ENCODE measurements at regions of chr2 and their contacts with region 1.

Region 1: GRCh38 chr2:20675701-20676352 is 8.9 kb downstream of the GDF7 start:
- DNase-seq: peak; percentile 15
- ATAC-seq: peak; percentile 89
- H3K4me3 ChIP-seq: no peak overlapping the region
- H3K27ac ChIP-seq: peak overlapping the region; percentile 69
- H3K4me1 ChIP-seq: peaks cover 37% of the 10 kb centered on the region
- H3K27me3 ChIP-seq: peaks cover 0 to 6% of the 10 kb centered on the region in 2 experiments; a peak in 3 of 4 replicates
- CTCF ChIP-seq: no peak
- EP300 ChIP-seq: no peak
- POLR2A ChIP-seq: no peak
- RAD21 ChIP-seq: no peak

Region 2: DNA sequence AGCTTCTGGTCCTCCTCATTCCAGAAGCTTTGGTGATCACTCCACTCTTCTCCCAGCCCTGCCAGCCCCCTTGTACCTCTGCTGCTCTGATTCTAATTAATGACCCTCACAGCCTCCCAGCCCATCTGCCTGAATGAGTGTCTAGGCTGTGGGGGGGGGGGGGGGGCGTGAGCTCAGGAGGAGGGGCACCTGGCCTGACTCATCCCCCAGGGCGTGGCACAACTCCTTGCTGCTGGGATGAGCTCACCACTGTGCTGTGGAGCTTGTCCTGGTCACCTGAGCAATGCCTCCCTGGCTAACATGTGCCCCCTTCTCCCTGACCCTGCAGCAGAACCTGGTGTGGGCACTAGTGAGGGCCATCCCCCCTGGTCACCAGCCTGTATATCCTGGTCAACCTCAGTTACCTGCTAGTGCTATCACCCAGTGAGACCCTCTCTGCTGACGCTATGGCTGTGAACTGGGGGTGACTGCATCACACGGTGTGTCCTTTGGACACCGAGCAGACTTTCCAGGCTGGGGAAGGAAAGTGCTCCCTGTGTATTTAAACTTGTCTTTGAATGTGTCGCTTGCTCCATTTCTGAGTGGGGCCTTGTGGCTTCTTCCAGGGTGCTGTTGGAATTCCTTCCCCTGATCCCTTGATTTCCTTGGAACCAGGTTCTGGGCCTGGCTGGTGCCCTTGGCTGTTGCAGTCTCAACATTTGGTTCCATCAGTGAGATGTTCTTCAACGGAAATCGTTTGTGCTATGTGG is 283.7 kb before region 1 on chr2:
- CTCF ChIA-PET with region 1: no interaction called
- POLR2A ChIA-PET with region 1: no interaction called
- RAD21 ChIA-PET with region 1: no interaction called
- SMC1A ChIA-PET with region 1: no interaction called
- in situ Hi-C with region 1: no loop called
- intact Hi-C with region 1: no loop called
- DNase-seq: no peak
- ATAC-seq: no peak
- H3K4me3 ChIP-seq: no peak overlapping the region
- H3K27ac ChIP-seq: no peak overlapping the region
- H3K4me1 ChIP-seq: no peaks in the 10 kb centered on the region
- H3K27me3 ChIP-seq: peaks cover 1 to 2% of the 10 kb centered on the region in 2 experiments
- CTCF ChIP-seq: no peak
- EP300 ChIP-seq: no peak
- POLR2A ChIP-seq: no peak
- RAD21 ChIP-seq: no peak

Region 3: DNA sequence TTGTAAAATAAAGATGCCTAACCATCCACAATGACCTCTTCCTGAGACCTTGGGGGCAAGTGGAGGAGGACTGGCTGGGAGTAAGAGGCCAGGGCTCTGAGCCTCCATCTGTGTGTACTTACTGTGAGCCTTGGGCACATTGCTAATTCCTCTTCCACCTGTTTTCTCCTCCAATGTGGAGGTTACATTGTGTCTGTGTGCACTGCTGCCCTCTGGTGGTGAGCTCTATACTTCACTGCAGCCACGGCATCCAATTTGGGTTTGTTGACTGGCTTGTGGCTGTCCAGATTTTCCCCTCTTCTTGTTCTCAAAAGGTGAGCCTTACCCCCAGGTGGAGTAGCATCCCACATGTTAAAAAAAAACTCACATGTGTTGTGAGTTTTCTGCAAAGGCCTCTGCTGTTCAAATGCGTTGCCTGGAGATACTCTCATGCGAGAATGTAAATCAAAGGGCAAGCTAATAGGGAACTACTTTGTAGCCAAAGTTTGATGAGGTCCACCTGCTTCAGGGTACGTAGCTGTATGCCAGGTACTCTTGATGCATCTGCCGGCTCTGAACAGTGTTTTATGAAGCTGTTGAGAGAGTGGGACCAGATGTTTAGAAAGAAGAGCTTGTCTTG is 287.2 kb after region 1 on chr2:
- CTCF ChIA-PET with region 1: interaction called, 28 read pairs
- POLR2A ChIA-PET with region 1: interaction called, 3 read pairs
- RAD21 ChIA-PET with region 1: interaction called, 5 read pairs
- SMC1A ChIA-PET with region 1: interaction called, 5 read pairs
- in situ Hi-C with region 1: no loop called
- intact Hi-C with region 1: no loop called
- DNase-seq: no peak
- ATAC-seq: peak; percentile 91
- H3K4me3 ChIP-seq: no peak overlapping the region
- H3K27ac ChIP-seq: no peak overlapping the region
- H3K4me1 ChIP-seq: no peaks in the 10 kb centered on the region
- H3K27me3 ChIP-seq: no peaks in the 10 kb centered on the region; a peak in 1 of 4 replicates
- CTCF ChIP-seq: peak; percentile 81 to 84 (median 82)
- EP300 ChIP-seq: no peak
- POLR2A ChIP-seq: no peak
- RAD21 ChIP-seq: peak; percentile 86

Measured in GM12878 (cell line).